Endothelial cell of umbilical vein (primary cell): ENCODE measurements at regions of chr4 and their contacts with region 1.

Region 1: DNA sequence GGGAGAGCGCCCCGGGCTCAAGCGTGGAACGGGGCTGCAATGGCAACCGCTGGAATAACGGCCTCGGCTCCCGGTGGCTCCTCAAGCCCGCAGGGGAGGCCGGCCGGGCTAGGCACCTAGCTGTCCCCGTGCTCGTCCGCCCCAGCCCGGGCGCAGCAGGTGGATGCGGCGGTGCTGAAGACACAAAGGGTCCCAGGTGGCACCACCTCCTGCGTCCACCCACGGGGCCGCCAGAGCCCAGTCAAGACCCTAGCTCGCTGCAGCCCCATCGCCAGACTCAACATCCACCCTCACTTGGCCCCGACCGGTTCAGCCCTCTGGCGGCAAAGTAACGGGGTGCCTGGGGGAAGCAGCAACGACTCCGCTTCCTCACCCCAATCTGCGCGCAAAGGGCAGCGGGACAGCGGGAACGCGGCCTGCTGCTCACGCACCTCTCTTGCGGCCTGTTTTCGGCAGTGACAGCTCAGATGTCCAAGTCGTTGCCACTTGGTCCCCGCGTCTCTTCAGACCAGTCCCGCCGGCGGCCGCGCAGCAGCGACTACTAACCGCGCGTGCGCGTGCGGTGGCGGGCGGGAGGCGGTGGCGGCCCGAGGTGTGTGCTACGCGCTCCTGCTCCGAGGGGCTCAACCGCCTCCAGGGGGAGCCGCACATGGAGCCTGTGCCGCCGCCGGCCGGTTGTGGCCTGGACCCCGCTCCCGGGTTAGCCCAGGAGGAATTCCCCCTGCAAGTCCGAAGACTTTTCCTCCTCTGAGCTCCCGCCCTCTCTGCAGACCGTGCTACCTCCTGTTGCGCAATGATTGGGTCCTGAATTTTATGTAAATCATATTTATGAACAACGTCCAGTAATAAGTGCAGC is at the start of gene CLGN:
- DNase-seq: peak; percentile 78
- H3K4me3 ChIP-seq: peak within 1 kb of the TSS; percentile 30 to 64 (median 48)
- H3K27ac ChIP-seq: no peak within 1 kb of the TSS
- H3K4me1 ChIP-seq: peaks cover 9% of the 10 kb centered on the region
- H3K27me3 ChIP-seq: peaks cover 14 to 34% of the 10 kb centered on the region in 2 experiments
- CTCF ChIP-seq: peak; percentile 58 to 68
- POLR2A ChIP-seq: no peak
- total RNA-seq, gene CLGN: 0.60 and 1.00 TPM in 2 replicates

Region 2: GRCh38 chr4:139177868-139178611 is 1249.3 kb before region 1 on chr4:
- CTCF ChIA-PET with region 1: no interaction called
- POLR2A ChIA-PET with region 1: no interaction called
- dilution Hi-C with region 1: no loop called
- intact Hi-C with region 1: no loop called
- DNase-seq: peak; percentile 96
- H3K4me3 ChIP-seq: peak overlapping the region; percentile 83 to 93 (median 84)
- H3K27ac ChIP-seq: peak overlapping the region; percentile 75
- H3K4me1 ChIP-seq: peaks cover 7% of the 10 kb centered on the region
- H3K27me3 ChIP-seq: no peaks in the 10 kb centered on the region
- CTCF ChIP-seq: no peak
- POLR2A ChIP-seq: peak; percentile 75

Region 3: GRCh38 chr4:140373328-140374129 is 53.8 kb before region 1 on chr4 and contains the start of gene SCOC:
- CTCF ChIA-PET with region 1: interaction called, 10 read pairs
- POLR2A ChIA-PET with region 1: no interaction called
- dilution Hi-C with region 1: no loop called
- intact Hi-C with region 1: loop called (anchors 2 kb)
- DNase-seq: peak; percentile 100
- H3K4me3 ChIP-seq: peak within 1 kb of the TSS; percentile 76 to 92 (median 79)
- H3K27ac ChIP-seq: peak within 1 kb of the TSS; percentile 71
- H3K4me1 ChIP-seq: peaks cover 14% of the 10 kb centered on the region
- H3K27me3 ChIP-seq: no peaks in the 10 kb centered on the region
- CTCF ChIP-seq: no peak
- POLR2A ChIP-seq: peak; percentile 80
- total RNA-seq, gene SCOC: 38.3 and 38.5 TPM in 2 replicates

Region 4: DNA sequence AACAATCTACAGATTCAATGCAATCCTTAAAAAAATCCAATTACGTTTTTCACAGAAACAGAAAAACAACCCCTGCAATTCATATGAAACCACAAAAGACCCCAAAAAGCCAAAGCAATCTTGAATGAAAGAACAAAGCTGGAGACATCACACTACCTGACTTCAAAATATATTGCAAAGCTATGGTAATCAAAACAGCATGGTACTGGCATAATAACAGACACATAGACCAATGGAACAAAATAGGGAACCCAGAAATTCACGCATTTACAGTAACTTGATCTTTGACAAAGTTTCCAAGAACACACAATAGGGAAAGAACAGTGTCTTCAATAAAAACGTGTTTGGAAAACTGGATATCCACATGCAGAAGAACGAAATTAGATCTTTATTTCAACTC is 56.1 kb after region 1 on chr4:
- CTCF ChIA-PET with region 1: no interaction called
- POLR2A ChIA-PET with region 1: no interaction called
- dilution Hi-C with region 1: no loop called
- intact Hi-C with region 1: no loop called
- DNase-seq: no peak
- H3K4me3 ChIP-seq: no peak overlapping the region
- H3K27ac ChIP-seq: no peak overlapping the region
- H3K4me1 ChIP-seq: no peaks in the 10 kb centered on the region
- H3K27me3 ChIP-seq: peaks cover 1 to 7% of the 10 kb centered on the region in 2 experiments
- CTCF ChIP-seq: no peak
- POLR2A ChIP-seq: no peak